Left cardiac atrium (tissue), 4 donors: ENCODE measurements at regions of chr1 and their contacts with region 1.

Region 1: GRCh38 chr1:207797229-207797961 is 45.5 kb downstream of the CD46 start:
- DNase-seq: peak; percentile 85
- ATAC-seq: peak; percentile 78 to 89

Region 2: GRCh38 chr1:207644852-207645634 is 152.4 kb before region 1 on chr1 and contains the start of gene CR1L:
- intact Hi-C with region 1: loop called in 1 of 2 experiments (anchors 10 kb)
- DNase-seq: peak; percentile 84
- ATAC-seq: peak; percentile 99
- total RNA-seq, gene CR1L: not detected